IMR-90 (cell line): ENCODE measurements at regions of chr16 and their contacts with region 1.

Region 1: GRCh38 chr16:3938848-3939624 is 58.5 kb upstream of the CREBBP start:
- DNase-seq: peak; percentile 89
- ATAC-seq: peak; percentile 91
- H3K4me3 ChIP-seq: no peak overlapping the region; the same call in none of the 2 replicates
- H3K27ac ChIP-seq: peak overlapping the region; percentile 73
- H3K4me1 ChIP-seq: peaks cover 15% of the 10 kb centered on the region
- H3K27me3 ChIP-seq: no peaks in the 10 kb centered on the region
- CTCF ChIP-seq: peak; percentile 81
- POLR2A ChIP-seq: no peak
- RAD21 ChIP-seq: peak; percentile 75

Region 2: GRCh38 chr16:3780570-3780969 is 158.5 kb before region 1 on chr16:
- CTCF ChIA-PET with region 1: interaction called, 3 read pairs
- POLR2A ChIA-PET with region 1: interaction called, 26 read pairs
- dilution Hi-C with region 1: no loop called
- in situ Hi-C with region 1: no loop called
- intact Hi-C with region 1: no loop called
- DNase-seq: peak; percentile 19
- ATAC-seq: no peak
- H3K4me3 ChIP-seq: no peak overlapping the region
- H3K27ac ChIP-seq: no peak overlapping the region
- H3K4me1 ChIP-seq: no peaks in the 10 kb centered on the region
- H3K27me3 ChIP-seq: no peaks in the 10 kb centered on the region
- CTCF ChIP-seq: no peak
- POLR2A ChIP-seq: no peak
- RAD21 ChIP-seq: peak; percentile 27; the same call in 1 of the 2 replicates

Region 3: DNA sequence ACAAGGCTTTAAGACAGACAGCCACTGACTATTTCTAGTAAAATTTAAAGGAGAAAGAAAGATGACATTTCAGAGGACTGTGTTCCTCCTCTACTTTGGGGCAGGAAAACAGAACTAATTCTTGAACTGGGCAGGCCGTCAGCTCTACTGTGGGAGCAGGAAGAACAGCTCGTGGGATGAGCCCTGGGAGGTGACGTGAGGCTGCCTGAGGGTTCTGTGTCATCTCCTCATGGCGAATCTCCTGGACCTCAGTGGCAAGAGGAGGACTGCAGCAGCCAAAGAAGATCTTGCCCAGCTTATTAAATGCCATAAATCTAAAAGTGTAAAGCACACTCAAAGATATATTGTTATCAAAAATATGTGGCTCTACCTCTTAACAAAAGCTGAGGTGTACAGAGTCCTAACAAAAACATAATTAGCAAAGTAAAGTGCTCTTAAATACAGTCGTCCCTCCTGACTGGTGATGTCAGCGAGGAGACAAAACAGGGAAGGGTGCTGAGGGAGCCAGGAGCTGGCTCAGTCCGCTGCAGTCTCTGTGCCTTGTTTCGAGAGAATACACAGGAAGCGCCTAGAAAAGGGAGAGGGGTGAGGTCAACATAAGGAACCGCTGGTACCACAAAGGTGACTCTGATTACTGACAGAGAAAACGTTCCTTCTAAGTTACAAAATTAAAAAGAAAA is 116.5 kb before region 1 on chr16:
- CTCF ChIA-PET with region 1: no interaction called
- POLR2A ChIA-PET with region 1: no interaction called
- dilution Hi-C with region 1: no loop called
- in situ Hi-C with region 1: no loop called
- intact Hi-C with region 1: no loop called
- DNase-seq: peak; percentile 20
- ATAC-seq: no peak
- H3K4me3 ChIP-seq: no peak overlapping the region
- H3K27ac ChIP-seq: no peak overlapping the region
- H3K4me1 ChIP-seq: peaks cover 39% of the 10 kb centered on the region
- H3K27me3 ChIP-seq: no peaks in the 10 kb centered on the region
- CTCF ChIP-seq: no peak
- POLR2A ChIP-seq: no peak
- RAD21 ChIP-seq: no peak

Region 4: DNA sequence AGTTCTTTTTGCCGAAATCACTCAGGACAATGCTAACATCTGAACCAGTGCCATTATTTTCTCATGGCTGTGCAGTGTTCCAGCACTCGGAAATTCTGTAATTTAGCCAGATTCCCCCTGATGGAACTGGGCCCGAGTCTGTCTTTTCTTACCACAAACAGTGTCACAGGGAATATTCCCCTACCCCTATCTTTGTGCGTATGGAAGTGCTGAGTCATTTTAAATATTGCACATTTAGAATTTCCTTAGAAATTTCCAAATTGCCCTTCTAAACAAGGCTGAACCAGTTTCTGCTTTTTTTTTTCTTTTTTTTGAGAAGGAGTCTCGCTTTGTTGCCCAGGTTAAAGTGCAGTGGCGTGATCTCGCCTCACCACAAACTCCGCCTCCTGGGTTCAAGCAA is 29.5 kb after region 1 on chr16:
- CTCF ChIA-PET with region 1: interaction called, 4 read pairs
- POLR2A ChIA-PET with region 1: interaction called, 18 read pairs
- dilution Hi-C with region 1: no loop called
- in situ Hi-C with region 1: no loop called
- intact Hi-C with region 1: no loop called
- DNase-seq: no peak
- ATAC-seq: no peak
- H3K4me3 ChIP-seq: no peak overlapping the region
- H3K27ac ChIP-seq: no peak overlapping the region
- H3K4me1 ChIP-seq: peaks cover 13% of the 10 kb centered on the region
- H3K27me3 ChIP-seq: no peaks in the 10 kb centered on the region
- CTCF ChIP-seq: no peak
- POLR2A ChIP-seq: no peak
- RAD21 ChIP-seq: no peak